HepG2 (cell line): ENCODE measurements at regions of chr10 and their contacts with region 1.

Region 1: DNA sequence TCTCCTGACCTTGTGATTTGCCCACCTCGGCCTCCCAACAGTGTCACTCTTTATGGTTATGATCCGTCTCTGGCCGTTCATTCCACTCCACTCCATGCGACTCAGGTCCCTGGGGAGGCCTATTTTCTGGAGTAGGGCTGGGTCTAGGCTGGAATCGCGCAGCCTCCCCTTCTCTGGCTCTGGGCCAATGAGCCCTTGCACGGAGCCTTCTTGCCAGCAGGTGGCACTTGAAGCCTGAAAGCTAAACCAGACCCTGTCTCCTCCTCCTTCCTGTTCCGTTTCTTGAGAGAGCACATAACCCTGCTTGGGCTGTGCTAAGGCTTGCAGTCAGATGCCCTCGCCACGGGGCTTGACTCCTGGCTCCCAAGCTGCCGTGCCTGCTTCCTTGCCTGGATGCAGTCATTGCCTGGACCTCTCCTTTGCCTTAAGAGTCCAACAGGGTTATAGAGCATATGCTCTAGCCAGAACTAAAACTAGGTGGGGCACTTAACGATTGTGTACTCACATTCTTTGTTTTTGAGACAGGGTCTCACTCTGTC is 9.6 kb upstream of the DNAJB12 start:
- DNase-seq: peak; percentile 68
- ATAC-seq: peak; percentile 83
- H3K4me3 ChIP-seq: no peak overlapping the region
- H3K27ac ChIP-seq: no peak overlapping the region
- H3K4me1 ChIP-seq: peaks cover 10% of the 10 kb centered on the region
- H3K27me3 ChIP-seq: no peaks in the 10 kb centered on the region
- CTCF ChIP-seq: peak; percentile 94
- EP300 ChIP-seq: no peak
- POLR2A ChIP-seq: no peak
- RAD21 ChIP-seq: peak; percentile 81

Region 2: GRCh38 chr10:72328045-72328828 is 36.1 kb before region 1 on chr10:
- CTCF ChIA-PET with region 1: no interaction called
- POLR2A ChIA-PET with region 1: no interaction called
- in situ Hi-C with region 1: no loop called
- intact Hi-C with region 1: no loop called
- DNase-seq: peak; percentile 71
- ATAC-seq: peak; percentile 72
- H3K4me3 ChIP-seq: peak overlapping the region; percentile 42 to 71 (median 48); a peak in 5 of 6 replicates
- H3K27ac ChIP-seq: no peak overlapping the region
- H3K4me1 ChIP-seq: peaks cover 90% of the 10 kb centered on the region
- H3K27me3 ChIP-seq: no peaks in the 10 kb centered on the region
- CTCF ChIP-seq: peak; percentile 91
- EP300 ChIP-seq: no peak
- POLR2A ChIP-seq: 0 out of 4 replicates have a peak, but pooled peaks of 1 of the 2 experiments have one; percentile 39
- RAD21 ChIP-seq: peak; percentile 98

Region 3: GRCh38 chr10:72567884-72568640 is 203.8 kb after region 1 on chr10:
- CTCF ChIA-PET with region 1: interaction called, 4 read pairs
- POLR2A ChIA-PET with region 1: no interaction called
- in situ Hi-C with region 1: loop called (anchors 10 kb)
- intact Hi-C with region 1: loop called (anchors 5 kb)
- DNase-seq: peak; percentile 11
- ATAC-seq: no peak
- H3K4me3 ChIP-seq: no peak overlapping the region
- H3K27ac ChIP-seq: no peak overlapping the region
- H3K4me1 ChIP-seq: peaks cover 10% of the 10 kb centered on the region
- H3K27me3 ChIP-seq: no peaks in the 10 kb centered on the region
- CTCF ChIP-seq: peak; percentile 56
- EP300 ChIP-seq: no peak
- POLR2A ChIP-seq: no peak
- RAD21 ChIP-seq: no peak

Region 4: DNA sequence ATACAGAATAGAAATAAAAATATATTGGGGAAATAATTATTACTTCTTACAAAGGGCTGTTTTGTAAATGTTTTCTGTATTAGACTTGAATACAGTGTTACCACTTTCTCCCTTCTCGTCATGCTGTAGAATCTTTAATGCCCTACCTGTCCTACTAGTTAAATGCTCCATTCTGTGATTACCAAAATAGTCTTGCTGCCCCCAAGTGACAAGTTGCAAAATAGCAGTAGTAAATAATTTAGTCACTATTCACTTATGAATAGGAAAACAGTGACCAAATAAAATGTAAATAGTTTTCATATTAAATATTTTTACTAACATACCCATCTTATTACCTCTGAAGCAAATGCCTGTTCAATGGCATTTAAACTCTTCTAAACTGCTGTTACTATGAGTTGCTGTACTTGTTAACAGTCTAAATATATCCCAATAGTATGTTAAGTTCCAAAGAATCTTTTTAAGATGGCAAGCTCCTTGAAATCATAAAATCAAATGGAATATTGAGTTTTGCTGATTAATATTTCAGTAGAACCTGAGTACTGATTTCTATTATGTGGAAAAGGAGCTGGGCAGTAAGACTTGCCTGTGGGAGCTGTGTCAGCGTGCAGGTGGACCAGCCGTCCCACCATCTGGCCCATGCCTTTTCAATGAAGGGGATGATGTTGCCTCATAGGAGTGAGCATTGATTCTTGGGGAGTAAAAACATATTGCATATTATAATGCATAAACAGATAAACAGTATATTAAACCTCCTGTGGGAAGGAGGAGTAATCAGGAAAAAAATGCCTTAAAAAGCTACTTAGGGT is 511.1 kb after region 1 on chr10:
- CTCF ChIA-PET with region 1: interaction called, 7 read pairs
- POLR2A ChIA-PET with region 1: no interaction called
- in situ Hi-C with region 1: no loop called
- intact Hi-C with region 1: loop called (anchors 1 kb)
- DNase-seq: peak; percentile 18
- ATAC-seq: 0 out of 3 replicates have a peak, but pooled peaks have one; percentile 28
- H3K4me3 ChIP-seq: no peak overlapping the region
- H3K27ac ChIP-seq: no peak overlapping the region
- H3K4me1 ChIP-seq: no peaks in the 10 kb centered on the region
- H3K27me3 ChIP-seq: no peaks in the 10 kb centered on the region
- CTCF ChIP-seq: peak; percentile 59
- EP300 ChIP-seq: no peak
- POLR2A ChIP-seq: no peak
- RAD21 ChIP-seq: no peak